HepG2 (cell line): ENCODE measurements at regions of chr7 and their contacts with region 1.

Region 1: DNA sequence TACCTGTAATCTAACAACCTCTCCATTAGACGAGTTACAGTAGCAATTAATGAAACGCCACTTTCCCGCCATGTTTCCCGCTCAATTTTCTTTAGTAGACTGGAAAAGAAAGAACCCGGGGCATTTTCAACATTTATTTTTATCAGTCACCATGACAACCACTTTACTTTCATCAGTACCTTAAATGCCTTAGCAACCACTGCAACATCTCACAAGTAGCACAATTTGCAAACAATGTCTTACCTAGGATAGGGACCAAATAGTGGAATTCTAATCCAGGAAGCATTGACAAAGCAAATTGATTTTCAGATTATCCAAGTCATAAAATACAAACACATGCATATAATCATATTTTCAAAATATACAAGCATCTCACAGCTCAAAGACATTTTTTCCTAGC is 221.6 kb upstream of the IMMP2L start:
- DNase-seq: no peak
- ATAC-seq: no peak
- H3K4me3 ChIP-seq: no peak overlapping the region
- H3K27ac ChIP-seq: no peak overlapping the region
- H3K4me1 ChIP-seq: no peaks in the 10 kb centered on the region
- H3K27me3 ChIP-seq: no peaks in the 10 kb centered on the region
- CTCF ChIP-seq: no peak
- EP300 ChIP-seq: no peak
- POLR2A ChIP-seq: no peak
- RAD21 ChIP-seq: no peak

Region 2: DNA sequence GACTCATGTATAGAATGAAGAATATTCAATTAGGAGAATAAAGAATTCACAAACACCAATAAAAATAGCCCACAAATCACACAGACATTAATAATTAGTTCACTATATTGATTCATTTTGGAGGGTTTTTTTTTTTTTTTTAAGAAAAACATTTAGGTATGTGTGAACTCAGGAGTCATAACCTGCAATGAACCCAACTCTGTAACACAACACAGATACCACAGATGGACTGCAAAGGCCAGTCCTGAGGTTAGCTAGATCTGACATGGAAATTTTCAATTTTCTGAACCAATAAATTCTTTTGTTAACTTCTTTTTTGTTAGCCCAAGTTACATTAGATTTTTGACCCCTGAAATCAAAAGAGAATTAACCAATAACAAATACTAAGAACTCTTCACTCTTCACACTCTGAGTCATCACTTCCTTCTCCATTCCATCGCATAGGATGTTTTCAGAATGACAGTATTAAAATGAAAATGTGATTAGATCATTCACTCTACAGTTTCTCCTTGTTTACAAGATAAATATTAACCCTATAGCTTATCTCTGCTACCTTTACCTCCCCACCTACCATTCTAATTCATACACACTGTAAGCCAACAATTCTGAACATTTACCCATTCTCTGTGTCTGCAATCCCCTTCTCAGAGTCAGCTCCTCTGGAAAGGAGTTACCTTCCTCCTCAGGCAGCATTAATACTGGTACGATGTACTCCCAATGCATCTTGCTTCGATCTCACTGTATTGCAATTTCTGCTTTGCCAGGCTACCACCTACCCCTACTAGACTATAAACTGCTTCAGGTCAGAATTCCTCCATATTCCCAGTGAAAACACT is 551.4 kb before region 1 on chr7:
- CTCF ChIA-PET with region 1: no interaction called
- POLR2A ChIA-PET with region 1: no interaction called
- in situ Hi-C with region 1: no loop called
- intact Hi-C with region 1: no loop called
- DNase-seq: peak; percentile 28
- ATAC-seq: no peak; the same call in 2 of the 3 replicates
- H3K4me3 ChIP-seq: no peak overlapping the region
- H3K27ac ChIP-seq: no peak overlapping the region
- H3K4me1 ChIP-seq: no peaks in the 10 kb centered on the region
- H3K27me3 ChIP-seq: no peaks in the 10 kb centered on the region
- CTCF ChIP-seq: no peak
- EP300 ChIP-seq: no peak
- POLR2A ChIP-seq: no peak
- RAD21 ChIP-seq: no peak

Region 3: DNA sequence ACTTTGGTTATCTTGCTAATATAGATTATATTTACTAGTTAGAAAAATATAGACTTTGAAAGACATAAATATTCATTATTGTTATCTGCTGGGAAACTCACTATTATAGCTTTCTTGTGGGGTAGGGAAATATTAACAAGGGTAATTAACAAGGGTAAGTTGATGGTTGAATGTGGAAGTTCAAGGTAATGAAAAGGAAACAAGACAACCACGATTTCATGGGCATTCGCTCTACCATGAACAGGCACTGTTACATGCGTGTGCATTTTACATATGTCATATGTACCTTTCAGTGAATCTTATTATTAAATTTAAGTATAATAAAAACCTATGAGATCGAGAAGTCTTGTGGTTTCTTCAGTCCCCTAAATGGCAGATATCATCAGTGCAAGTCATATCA is 29.5 kb after region 1 on chr7:
- CTCF ChIA-PET with region 1: no interaction called
- POLR2A ChIA-PET with region 1: no interaction called
- in situ Hi-C with region 1: no loop called
- intact Hi-C with region 1: loop called (anchors 2 kb)
- DNase-seq: no peak
- ATAC-seq: no peak
- H3K4me3 ChIP-seq: no peak overlapping the region
- H3K27ac ChIP-seq: no peak overlapping the region
- H3K4me1 ChIP-seq: no peaks in the 10 kb centered on the region
- H3K27me3 ChIP-seq: no peaks in the 10 kb centered on the region
- CTCF ChIP-seq: no peak
- EP300 ChIP-seq: no peak
- POLR2A ChIP-seq: no peak
- RAD21 ChIP-seq: no peak